Heart right ventricle (tissue), 16 donors: ENCODE measurements at regions of chr21 and their contacts with region 1.

Region 1: DNA sequence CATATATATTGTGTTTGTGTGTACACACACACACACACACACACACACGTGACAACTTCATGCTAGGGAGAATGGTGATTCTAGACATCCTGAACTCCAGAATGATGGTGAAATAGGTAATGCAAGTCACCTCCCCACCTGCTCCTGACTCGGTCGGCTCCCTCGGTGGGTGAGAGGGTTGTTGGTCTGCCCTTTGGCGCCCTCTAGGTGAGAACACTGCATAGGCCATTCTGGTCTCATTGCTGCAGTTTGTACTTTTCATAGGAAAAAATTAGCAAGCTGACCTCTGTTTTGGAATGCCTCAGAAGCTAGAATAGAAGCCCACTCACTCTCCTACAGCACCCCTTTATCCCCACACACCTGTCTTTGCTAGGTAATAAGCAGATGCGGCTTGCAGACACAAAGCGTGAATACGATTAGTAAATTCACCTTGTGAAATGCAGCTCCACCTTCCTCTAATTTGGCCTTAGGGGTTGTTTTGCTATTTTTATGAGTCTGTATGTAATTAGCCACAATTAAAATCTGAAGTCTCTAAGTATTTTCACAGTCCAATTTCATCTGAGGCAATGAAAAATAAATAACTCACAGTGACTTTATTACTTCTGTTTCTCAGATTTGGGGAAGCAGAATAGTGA is 130.0 kb upstream of the KCNJ15 start:
- DNase-seq: peak; percentile 26 to 34
- ATAC-seq: peak in 5 of 8 donors; percentile 39 to 82 (median 65)
- H3K4me3 ChIP-seq: no peak overlapping the region
- H3K27ac ChIP-seq: no peak overlapping the region
- H3K4me1 ChIP-seq: no peaks in the 10 kb centered on the region
- H3K27me3 ChIP-seq: peaks cover 0 to 29% (median 20%) of the 10 kb centered on the region in 7 donors
- CTCF ChIP-seq: peak; percentile 35 to 76 (median 68)

Region 2: DNA sequence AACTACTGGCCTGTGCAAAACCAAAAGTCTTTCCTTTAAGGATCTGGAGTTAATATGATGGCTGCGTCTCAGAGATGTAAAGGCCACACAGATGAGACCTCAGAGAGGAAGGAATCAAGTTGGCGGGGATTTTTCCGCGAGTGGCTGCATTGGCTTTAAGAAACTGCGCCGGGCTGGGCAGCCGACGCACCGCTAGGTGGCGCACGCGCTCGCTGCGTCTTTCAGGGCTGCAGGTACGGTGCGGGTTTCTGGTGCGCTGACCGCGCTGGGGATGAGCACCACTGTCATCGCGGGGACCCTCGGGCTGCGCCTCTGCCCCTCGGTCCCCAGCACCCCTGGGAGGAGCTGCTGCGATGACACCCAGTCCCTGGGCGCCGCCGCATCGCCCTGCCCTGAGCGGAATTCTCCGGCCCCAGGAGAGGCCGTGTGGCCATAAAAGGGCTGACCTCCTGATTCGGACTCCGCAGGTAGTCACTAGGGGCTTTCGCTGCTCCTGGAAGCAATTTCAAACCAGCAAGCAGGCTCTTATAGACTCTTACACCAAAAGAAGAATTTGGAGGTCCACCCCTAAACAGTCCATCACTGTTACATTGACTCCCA is 451.5 kb before region 1 on chr21:
- intact Hi-C with region 1: loop called in 3 of 10 experiments (anchors 10 kb)
- DNase-seq: peak; percentile 48 to 65
- ATAC-seq: peak; percentile 70 to 88 (median 76)
- H3K4me3 ChIP-seq: peak overlapping the region in 3 of 10 donors; percentile 10 to 30 (median 26)
- H3K27ac ChIP-seq: no peak overlapping the region
- H3K4me1 ChIP-seq: peaks cover 0 to 13% (median 0%) of the 10 kb centered on the region in 9 donors
- H3K27me3 ChIP-seq: peaks cover 0 to 32% (median 19%) of the 10 kb centered on the region in 7 donors
- CTCF ChIP-seq: peak; percentile 86 to 98 (median 96)

Region 3: DNA sequence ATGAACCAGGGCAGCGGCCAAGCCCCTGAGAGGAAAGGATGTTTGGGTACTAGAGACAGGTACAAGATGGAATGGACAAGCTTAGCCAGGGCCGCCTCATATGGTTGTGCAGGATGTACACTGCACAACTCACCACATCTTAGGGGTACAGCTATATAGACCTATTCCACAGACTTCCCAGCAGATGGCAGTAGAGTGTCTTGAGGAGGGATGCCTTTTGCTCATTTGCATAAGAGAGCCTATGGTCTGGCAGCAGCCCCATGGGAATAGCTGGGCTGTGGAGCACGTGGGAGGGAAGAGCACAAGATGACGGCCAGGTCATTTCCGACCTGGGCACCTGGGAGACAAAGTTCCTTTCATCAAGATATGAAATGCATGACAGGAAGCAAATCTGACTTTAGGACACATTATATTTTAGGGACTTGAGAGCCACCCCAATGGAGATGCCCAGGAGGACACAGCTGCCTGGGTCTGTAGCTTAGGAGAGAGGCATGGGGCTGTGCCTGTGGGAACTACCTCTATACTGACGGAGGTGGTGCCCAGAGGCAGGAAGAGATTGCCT is 426.1 kb before region 1 on chr21:
- intact Hi-C with region 1: loop called in 2 of 10 experiments (anchors 5 to 10 kb)
- DNase-seq: peak in 1 of 2 donors; percentile 11
- ATAC-seq: peak in 7 of 8 donors; percentile 29 to 85 (median 70)
- H3K4me3 ChIP-seq: no peak overlapping the region
- H3K27ac ChIP-seq: no peak overlapping the region
- H3K4me1 ChIP-seq: no peaks in the 10 kb centered on the region
- H3K27me3 ChIP-seq: peaks cover 0 to 13% (median 0%) of the 10 kb centered on the region in 7 donors
- CTCF ChIP-seq: peak; percentile 33 to 75 (median 65)

Region 4: DNA sequence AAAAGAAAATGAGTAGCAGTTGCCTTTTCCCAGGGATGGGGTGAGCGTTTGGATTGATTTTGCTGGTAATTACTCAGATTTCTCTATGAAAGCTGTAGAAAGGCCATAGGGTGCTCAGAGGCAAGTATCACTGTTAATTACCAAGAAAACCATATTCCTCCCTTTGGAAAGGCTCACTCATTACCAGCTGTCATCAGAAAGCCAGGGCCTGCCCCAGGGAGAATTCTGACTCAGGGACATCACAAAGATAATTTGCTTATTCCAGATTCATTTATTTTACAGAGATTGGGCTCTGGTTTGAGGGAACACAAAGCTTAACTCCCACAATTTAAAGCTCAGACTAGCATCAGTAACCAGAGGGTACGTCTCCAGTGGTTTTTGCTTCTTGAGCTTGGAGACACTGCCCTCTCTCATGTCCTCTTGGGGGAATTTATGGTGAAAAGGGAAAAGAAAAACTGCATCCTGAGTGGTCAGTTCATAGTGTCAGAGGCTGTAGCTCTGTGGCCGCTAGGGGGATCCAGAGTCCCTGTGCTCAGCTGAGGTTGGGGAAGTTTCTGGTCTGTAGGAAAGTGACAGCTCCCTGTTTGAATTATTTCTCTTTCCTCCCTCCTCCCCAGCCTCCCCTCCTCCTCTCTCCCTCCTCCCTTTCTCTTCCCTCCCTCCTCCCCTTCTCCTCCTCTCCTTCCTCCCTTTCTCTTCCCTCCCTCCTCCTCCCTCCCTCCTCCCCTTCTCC is 414.8 kb before region 1 on chr21:
- intact Hi-C with region 1: loop called (anchors 2 to 10 kb)
- DNase-seq: peak; percentile 59 to 63
- ATAC-seq: peak; percentile 73 to 91 (median 82)
- H3K4me3 ChIP-seq: no peak overlapping the region
- H3K27ac ChIP-seq: no peak overlapping the region
- H3K4me1 ChIP-seq: peaks cover 0 to 20% (median 12%) of the 10 kb centered on the region in 9 donors
- H3K27me3 ChIP-seq: peaks cover 0 to 6% (median 0%) of the 10 kb centered on the region in 7 donors
- CTCF ChIP-seq: peak; percentile 61 to 86 (median 80)

Region 5: DNA sequence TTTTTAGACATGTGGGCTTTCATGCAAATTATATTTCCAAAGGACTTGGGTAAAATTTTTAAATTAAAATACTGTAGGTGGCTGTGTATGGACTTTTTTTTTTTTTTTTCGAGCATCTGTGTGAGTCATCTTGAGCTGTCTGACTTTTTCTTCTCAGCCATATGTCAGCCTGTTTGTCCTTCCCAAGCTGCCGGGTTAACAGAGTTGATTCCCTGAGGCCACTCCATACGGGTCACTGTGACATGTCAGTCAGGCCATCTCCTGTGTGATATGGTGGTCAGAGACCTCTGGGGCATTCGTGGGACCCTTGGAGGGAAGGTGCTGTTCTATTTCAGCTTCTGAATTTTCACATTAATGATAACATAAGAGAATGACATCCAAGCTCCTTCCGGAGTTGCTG is 358.8 kb before region 1 on chr21:
- intact Hi-C with region 1: loop called in 1 of 10 experiments (anchors 10 kb)
- DNase-seq: no peak
- ATAC-seq: no peak
- H3K4me3 ChIP-seq: no peak overlapping the region
- H3K27ac ChIP-seq: no peak overlapping the region
- H3K4me1 ChIP-seq: no peaks in the 10 kb centered on the region
- H3K27me3 ChIP-seq: peaks cover 0 to 10% (median 0%) of the 10 kb centered on the region in 7 donors
- CTCF ChIP-seq: no peak

Region 6: GRCh38 chr21:38236232-38236631 is 109.4 kb after region 1 on chr21:
- intact Hi-C with region 1: no loop called
- DNase-seq: no peak
- ATAC-seq: no peak
- H3K4me3 ChIP-seq: no peak overlapping the region
- H3K27ac ChIP-seq: no peak overlapping the region
- H3K4me1 ChIP-seq: peaks cover 0 to 11% (median 0%) of the 10 kb centered on the region in 9 donors
- H3K27me3 ChIP-seq: no peaks in the 10 kb centered on the region
- CTCF ChIP-seq: peak in 1 of 9 donors; percentile 7

Region 7: DNA sequence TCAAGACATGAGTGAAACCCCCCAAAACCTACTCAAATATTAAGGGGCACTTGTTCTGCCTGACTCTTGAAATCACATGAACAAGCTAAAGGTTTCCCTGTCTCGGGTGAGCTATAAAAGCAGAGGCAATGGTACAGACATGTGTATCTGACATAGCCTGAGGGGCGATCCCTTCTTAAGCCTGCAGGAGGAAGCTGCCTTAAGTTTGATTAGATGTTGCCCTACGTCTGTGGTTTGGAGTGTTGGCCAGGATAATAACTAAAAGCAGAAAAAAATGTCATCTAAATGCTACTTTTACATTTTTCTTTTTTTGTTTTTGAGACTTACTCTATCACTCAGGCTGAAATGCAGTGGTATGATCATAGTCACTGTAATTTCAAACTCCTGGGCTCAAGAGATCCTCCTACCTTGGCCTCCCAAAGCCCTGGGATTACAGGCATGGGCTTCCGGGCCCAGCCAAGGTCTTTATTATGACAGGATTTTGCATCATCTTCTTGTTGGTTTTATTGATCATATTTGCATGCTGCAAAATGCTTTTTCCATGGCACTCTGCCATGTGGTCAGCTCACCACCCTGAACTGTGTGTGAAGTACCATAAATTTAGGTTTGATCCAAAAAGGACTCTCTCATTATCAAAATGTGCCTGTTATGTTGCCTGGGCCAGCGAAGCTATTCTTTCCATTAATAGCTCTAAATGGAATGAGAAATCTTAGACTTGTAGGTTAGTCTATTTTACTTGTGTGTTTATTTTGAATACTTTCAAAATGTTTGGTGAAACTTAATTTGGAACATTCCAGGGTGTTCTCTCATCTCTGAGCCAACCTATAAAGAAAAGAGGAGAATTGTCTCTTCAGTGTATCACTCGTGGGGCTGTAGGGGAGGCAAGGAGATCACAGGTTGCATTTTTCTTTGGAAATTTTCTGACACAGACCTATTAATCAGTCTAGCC is 1237.1 kb after region 1 on chr21:
- intact Hi-C with region 1: no loop called
- DNase-seq: no peak
- ATAC-seq: no peak
- H3K4me3 ChIP-seq: no peak overlapping the region
- H3K27ac ChIP-seq: no peak overlapping the region
- H3K4me1 ChIP-seq: no peaks in the 10 kb centered on the region
- H3K27me3 ChIP-seq: no peaks in the 10 kb centered on the region
- CTCF ChIP-seq: no peak